Cardiac septum (tissue), 1 donor: ENCODE measurements at regions of chr9 and their contacts with region 1.

Region 1: GRCh38 chr9:37079370-37080164 is 40.8 kb upstream of the ZCCHC7 start:
- DNase-seq: peak; percentile 96

Region 2: DNA sequence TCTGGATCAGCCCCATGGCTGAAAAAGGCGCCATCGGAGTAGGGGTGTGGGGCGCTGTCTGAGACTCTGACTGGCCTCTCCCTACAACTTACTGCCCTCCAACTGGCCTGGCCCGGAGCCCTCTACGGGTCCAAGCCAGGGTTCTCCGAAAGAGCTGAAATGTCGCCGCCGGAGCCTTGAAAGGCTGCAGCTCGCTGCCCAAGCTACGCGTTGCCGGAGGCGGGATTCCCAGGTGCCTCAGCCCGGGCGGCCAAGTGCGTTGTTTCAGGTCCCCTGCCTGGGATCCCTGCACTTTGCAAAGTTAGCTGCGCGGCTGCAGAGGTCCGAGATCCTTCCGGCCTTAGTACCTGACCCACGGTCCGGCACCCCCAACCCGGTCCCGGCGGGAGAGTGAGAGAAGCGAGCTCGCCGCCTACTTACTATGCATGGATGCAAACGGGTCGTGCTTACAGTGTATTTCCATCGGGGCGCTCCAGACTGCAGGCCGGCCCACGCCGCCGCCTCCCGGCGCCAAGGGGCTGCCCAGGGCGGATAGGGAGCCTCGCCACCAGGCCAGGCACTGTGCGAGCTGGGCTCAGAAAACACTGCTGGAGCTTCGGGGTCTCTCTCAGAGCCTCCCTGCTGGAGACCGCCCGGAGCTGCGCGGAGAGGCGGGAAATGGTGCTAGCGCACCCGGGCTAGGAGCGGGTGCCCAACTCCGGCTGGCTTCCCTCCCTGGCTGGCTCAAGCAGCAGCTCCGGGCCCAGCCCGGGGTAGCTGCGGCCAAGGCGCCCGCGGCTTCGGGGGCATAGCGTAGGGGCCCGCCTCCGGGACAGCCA is 53.2 kb before region 1 on chr9:
- intact Hi-C with region 1: no loop called
- DNase-seq: no peak

Region 3: GRCh38 chr9:37036776-37037502 is 42.6 kb before region 1 on chr9:
- intact Hi-C with region 1: loop called (anchors 5 kb)
- DNase-seq: no peak

Region 4: GRCh38 chr9:37119907-37120842 is 40.6 kb after region 1 on chr9 and contains the start of gene ZCCHC7:
- intact Hi-C with region 1: loop called (anchors 2 kb)
- DNase-seq: peak; percentile 98
- total RNA-seq, gene ZCCHC7: 11.3 TPM